ENCODE measurements at regions of chr13 and their contacts with region 1.

Region 1: DNA sequence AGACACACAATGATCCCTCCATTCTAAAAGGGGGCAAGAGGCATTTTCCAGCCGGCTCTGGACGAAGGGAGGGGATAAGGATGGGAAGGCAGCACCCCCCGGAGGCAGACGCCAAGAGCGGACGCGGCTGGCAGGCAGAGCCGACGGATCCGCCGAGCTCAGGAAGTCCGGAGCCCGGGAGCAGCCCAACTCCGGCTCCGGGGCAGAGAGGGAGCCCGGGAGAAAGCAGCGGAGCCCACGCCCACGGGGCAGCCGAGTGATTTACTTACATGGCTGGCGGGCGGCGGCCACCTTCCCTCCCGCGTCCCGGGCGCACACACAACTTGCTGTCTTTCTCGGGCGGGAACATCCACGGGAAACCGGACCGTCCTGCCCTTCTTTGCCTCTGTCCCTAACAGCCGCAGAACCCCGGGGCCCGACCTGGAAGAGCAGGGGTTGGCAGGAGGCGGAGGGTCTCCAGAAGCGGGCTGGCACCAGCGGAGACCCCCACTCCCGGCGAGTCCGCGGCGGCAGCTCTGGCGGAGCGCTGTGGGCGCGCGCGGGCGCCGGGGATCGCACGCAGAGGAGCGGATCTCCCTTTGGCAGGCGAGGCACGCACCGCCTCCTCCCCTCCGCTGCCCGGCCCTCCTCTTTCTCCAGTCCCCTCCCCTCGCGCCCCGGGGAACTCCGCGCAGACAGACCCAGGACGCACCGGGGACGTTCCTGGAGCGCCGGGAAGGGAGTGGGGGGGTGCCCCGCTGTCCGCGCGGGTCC is at the start of gene LHFPL6:
- DNase-seq: peak; percentile 89 to 95 (median 94)
- ATAC-seq: peak; percentile 98
- H3K4me3 ChIP-seq: peak within 1 kb of the TSS; percentile 55
- H3K27ac ChIP-seq: peak within 1 kb of the TSS; percentile 90
- H3K4me1 ChIP-seq: peaks cover 3% of the 10 kb centered on the region
- H3K27me3 ChIP-seq: no peaks in the 10 kb centered on the region
- total RNA-seq, gene LHFPL6: 54.0 to 65.3 (median 56.4) TPM

Region 2: GRCh38 chr13:39273953-39274738 is 328.6 kb before region 1 on chr13:
- intact Hi-C with region 1: loop called in 1 of 4 experiments (anchors 10 kb)
- DNase-seq: peak in 1 of 3 donors; percentile 43
- ATAC-seq: no peak
- H3K4me3 ChIP-seq: no peak overlapping the region
- H3K27ac ChIP-seq: no peak overlapping the region
- H3K4me1 ChIP-seq: peaks cover 5% of the 10 kb centered on the region
- H3K27me3 ChIP-seq: no peaks in the 10 kb centered on the region

Region 3: GRCh38 chr13:39415008-39415802 is 187.6 kb before region 1 on chr13:
- intact Hi-C with region 1: loop called (anchors 5 to 10 kb)
- DNase-seq: peak; percentile 49 to 77 (median 73)
- ATAC-seq: peak; percentile 67 to 88
- H3K4me3 ChIP-seq: peak overlapping the region; percentile 32
- H3K27ac ChIP-seq: peak overlapping the region; percentile 58
- H3K4me1 ChIP-seq: peaks cover 11% of the 10 kb centered on the region
- H3K27me3 ChIP-seq: no peaks in the 10 kb centered on the region

Region 4: GRCh38 chr13:39422845-39423565 is 179.8 kb before region 1 on chr13:
- intact Hi-C with region 1: loop called (anchors 5 to 10 kb)
- DNase-seq: no peak
- ATAC-seq: no peak
- H3K4me3 ChIP-seq: no peak overlapping the region
- H3K27ac ChIP-seq: no peak overlapping the region
- H3K4me1 ChIP-seq: no peaks in the 10 kb centered on the region
- H3K27me3 ChIP-seq: no peaks in the 10 kb centered on the region

Region 5: DNA sequence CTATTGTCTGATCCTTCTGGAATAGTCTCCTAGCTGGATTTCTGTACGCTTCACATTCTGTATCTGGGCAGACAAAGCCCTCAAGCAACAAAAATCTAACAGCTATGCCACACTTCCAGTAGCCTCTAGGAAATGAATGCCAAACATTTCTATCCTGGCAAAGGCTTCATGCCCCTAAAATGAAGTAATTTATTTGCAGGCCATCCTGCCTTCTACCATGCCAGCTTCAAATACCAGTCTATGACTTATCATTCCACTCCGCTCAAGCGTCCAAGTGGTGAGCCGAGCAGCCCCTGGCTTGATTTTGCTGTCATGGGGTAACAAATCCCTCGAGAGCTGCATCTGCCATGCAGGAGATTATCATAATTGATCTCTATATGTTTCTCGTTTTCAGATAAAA is 86.7 kb before region 1 on chr13:
- intact Hi-C with region 1: no loop called
- DNase-seq: peak in 2 of 3 donors; percentile 16 to 30
- ATAC-seq: peak; percentile 80 to 85
- H3K4me3 ChIP-seq: no peak overlapping the region
- H3K27ac ChIP-seq: no peak overlapping the region
- H3K4me1 ChIP-seq: peaks cover 12% of the 10 kb centered on the region
- H3K27me3 ChIP-seq: no peaks in the 10 kb centered on the region

Region 6: DNA sequence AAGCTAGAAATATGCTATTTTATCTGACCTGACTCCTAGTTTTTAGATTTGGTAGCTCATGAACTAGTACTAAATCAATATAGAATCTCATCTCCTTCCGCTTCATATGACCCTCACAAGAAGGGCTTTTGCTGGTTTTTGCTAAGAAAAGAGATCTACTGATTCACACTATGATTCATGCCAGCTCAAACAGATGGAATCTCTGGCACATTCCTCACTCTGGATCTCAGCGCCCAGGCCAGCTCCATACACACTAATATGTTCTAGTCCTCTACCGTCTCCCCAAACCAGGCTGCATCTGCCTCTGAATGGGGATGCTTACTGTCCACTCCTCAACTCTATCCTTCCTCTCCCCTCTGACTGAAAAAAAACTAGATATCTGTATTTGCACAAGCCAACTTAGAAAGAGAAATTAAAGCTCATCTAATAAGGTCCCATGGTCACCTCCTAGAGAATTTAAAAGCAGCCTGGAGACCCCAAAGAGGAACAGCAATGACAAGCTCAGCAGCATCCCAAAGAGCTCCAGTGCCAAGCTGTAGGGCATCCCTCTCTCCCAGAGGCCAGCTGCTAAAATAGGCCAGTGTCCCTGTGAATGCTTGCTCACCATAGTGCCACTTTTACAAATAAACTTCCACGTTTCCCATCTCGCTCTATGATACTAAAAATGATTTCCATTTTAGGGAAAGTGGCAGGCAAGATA is 74.7 kb before region 1 on chr13:
- intact Hi-C with region 1: loop called in 1 of 4 experiments (anchors 5 kb)
- DNase-seq: peak in 1 of 3 donors; percentile 25
- ATAC-seq: peak in 1 of 2 donors; percentile 64
- H3K4me3 ChIP-seq: no peak overlapping the region
- H3K27ac ChIP-seq: no peak overlapping the region
- H3K4me1 ChIP-seq: peaks cover 7% of the 10 kb centered on the region
- H3K27me3 ChIP-seq: no peaks in the 10 kb centered on the region

Measured in right cardiac atrium (tissue), 5 donors.